HEK293 (cell line): ENCODE measurements at regions of chr3 and their contacts with region 1.

Region 1: DNA sequence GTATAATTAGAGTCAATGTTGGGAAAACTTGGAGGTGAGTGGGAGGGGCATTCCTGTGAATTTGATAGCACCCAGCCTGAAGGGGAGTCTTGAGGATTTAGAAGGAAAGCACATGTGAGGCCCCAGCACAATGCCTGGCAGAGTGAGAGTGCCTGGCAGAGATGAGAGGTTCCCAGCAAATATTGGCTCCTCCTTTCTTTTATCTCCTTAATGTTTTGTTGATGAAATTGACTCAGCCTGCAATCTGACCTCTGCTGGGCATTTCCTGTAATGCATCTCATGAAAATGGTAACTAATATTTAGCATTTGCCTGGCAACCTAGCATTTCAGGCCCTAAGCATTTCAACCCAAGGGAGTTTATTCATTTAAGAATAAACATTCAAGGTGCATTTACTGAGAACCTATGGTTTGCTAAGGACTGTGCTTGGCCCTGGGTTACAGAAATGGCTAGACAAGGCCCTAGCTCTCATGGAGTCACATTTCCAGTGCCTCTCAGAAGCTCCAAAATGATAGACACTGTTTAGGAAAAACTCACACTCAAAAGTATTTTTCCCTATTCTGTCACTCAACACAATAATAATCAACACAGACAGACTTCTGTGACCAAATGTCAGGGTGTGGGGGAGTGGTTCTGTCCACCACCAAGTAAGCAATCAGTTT is 19.0 kb downstream of the PDHB start:
- H3K4me3 ChIP-seq: no peak overlapping the region
- H3K27ac ChIP-seq: no peak overlapping the region
- H3K4me1 ChIP-seq: no peaks in the 10 kb centered on the region
- CTCF ChIP-seq: no peak

Region 2: DNA sequence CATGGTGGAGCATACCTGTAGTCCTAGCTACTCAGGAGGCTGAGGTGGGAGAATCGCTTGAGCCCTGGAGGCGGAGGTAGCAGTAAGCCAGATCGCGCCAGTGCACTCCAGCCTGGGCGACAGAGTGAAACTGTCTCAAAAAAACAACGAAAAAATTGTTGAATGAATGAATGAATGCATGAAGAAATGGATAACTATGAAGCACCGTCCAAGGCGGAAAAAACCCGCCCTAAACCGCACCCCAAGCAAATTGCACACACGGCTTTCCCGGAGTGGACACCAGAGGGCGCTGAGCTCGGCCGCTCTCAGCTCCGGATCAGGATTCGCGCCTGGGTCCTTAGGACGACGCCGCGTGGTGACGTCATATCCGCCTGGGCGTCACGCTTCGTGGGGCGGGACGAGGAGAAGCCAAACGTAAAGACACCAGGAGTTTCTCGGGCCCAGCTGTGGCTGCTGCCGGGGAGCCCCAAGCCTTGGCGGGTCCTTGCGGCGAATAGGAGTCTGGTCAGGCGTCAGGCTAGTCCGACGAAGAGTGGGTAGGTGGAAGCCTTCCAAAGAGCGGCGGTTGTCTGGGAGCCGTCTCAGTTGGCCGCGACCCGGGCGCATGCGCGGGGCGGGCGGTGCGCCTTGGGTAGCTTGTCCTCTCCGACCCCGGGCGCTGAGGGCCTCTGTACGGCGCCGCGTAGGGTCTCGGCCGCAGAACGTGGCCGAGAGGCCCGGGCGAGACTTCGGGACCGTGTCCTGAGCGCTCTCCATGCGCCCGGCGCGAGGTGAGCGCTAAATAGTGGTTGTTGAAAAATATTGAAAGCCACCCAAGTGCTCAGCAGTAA is 108.6 kb before region 1 on chr3 and contains the starts of genes HTD2 and RPP14:
- CTCF ChIA-PET with region 1: interaction called, 12 read pairs
- POLR2A ChIA-PET with region 1: no interaction called
- H3K4me3 ChIP-seq: peak within 1 kb of the TSS; percentile 90
- H3K27ac ChIP-seq: peak within 1 kb of the TSS; percentile 76
- H3K4me1 ChIP-seq: no peaks in the 10 kb centered on the region
- CTCF ChIP-seq: peak; percentile 86; the same call in 1 of the 2 replicates

Region 3: DNA sequence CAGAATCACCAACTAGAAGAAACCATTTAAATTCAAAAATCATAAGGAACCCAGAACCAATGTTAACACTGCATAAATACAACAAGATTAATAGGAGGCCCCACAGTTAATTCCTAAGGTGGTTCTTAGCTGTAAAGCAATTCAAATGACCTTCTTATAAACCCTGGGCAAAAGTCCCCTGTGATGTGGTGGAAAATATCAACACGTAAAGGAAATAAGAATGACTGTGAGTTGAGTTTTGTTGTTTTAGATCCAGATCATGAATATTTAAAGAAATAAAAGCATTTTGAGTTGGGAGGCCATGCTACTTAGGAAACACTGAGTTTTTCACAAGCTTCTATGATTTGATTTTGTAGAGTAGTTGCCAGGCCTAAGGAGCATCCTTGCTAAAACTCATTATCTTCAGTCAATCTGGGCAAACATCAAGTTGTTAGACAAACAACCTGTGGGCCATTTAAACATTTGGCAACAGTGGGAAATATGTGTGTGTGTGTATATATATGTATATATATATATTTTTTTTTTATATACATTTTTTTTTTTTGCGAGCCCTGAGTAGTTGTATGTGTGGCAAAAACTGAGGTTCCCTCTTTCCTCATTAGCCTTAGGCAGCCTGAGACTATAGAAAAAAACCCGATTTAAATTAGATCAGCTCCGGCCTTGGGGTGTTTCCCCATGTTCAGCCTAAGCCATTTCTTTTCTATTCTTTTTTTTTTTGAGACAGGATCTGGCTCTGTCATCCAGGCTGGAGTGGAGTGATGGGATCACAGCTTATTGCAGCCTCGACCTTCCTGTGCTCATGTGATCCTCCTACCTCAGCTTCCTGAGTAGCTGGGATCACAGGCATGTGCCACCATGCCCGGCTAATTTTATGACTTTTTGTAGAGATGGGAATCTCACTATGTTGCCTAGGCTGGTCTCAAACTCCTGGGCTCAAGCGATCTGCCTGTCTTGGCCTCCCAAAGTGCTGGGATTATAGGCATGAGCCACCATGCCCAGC is 90.0 kb before region 1 on chr3:
- CTCF ChIA-PET with region 1: interaction called, 14 read pairs
- POLR2A ChIA-PET with region 1: no interaction called
- H3K4me3 ChIP-seq: no peak overlapping the region
- H3K27ac ChIP-seq: no peak overlapping the region
- H3K4me1 ChIP-seq: 0 out of 2 replicates have a peak, but pooled peaks cover 5% of the 10 kb centered on the region
- CTCF ChIP-seq: no peak

Region 4: DNA sequence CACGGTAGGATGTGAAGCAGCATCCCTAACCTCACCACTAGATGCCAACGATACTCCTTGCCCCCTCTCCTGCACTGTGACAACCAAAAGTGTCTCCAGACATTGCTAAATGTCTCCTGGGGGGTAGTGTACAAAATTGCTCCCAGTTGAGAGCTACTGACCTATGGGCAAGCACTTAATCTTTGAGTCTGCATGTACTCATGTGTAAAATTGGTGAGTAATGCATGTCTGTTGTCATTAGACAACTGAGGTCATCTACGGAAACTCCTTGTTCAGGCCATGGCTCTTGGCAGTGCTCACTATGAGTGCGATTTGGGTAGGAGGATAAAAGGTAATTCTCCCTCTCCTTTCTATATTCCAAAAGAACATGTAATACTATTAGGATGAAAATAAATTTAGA is 10.3 kb before region 1 on chr3:
- CTCF ChIA-PET with region 1: interaction called, 16 read pairs
- POLR2A ChIA-PET with region 1: no interaction called
- H3K4me3 ChIP-seq: no peak overlapping the region
- H3K27ac ChIP-seq: no peak overlapping the region
- H3K4me1 ChIP-seq: peaks cover 3% of the 10 kb centered on the region; the same call in 1 of the 2 replicates
- CTCF ChIP-seq: no peak